Naive thymus-derived CD4-positive, alpha-beta T cell (primary cell): ENCODE measurements at regions of chr4 and their contacts with region 1.

Region 1: DNA sequence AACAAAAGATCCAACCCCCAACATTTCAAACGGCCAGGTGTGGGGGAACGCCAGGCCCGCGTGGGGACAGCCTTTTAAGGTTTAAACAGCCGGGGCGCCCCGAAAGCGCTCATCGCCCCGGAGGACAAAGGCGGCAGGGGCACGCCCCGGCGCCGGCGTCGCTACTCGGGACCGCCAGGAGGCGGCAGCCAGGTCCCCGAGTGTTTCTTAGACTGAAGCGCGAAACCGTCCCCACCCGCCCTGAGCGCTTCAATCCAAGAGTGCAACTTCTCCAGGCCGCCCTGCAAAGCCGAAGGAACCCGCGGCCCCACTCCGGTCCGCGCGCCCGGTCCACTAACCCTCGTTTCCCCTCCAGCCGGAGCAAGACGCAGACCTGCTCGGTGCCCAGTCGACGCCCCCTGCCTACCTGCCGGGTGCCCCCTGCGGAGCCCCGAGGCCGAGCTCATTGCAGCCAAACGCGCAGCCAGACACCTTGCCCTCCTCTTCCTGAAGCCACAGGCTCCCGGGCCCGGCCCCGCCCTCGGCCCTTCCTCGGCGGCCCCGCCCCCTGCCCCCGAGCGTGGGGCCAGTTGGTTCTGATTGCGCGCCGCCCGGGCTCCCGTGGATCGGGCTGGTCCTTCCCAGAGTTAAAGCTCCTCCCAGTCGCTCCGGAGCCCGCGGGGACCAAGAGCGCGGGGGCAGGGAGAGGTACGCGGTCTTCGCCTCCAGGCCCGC is at the start of gene CASP6:
- DNase-seq: peak; percentile 64 to 78 (median 75)
- ATAC-seq: peak; percentile 92
- H3K4me3 ChIP-seq: peak within 1 kb of the TSS; percentile 78
- H3K4me3 Mint-ChIP-seq: peak within 1 kb of the TSS; percentile 86 to 96 (median 94)
- H3K27ac ChIP-seq: peak within 1 kb of the TSS; percentile 83
- H3K27ac Mint-ChIP-seq: peak within 1 kb of the TSS; percentile 85 to 95 (median 94)
- H3K4me1 ChIP-seq: peaks cover 8 to 16% of the 10 kb centered on the region in 2 donors
- H3K4me1 Mint-ChIP-seq: peaks cover 20 to 50% (median 48%) of the 10 kb centered on the region in 7 donors
- H3K27me3 ChIP-seq: no peaks in the 10 kb centered on the region
- H3K27me3 Mint-ChIP-seq: no peaks in the 10 kb centered on the region
- total RNA-seq, gene CASP6: 9.3 to 29.9 (median 23.6) TPM

Region 2: DNA sequence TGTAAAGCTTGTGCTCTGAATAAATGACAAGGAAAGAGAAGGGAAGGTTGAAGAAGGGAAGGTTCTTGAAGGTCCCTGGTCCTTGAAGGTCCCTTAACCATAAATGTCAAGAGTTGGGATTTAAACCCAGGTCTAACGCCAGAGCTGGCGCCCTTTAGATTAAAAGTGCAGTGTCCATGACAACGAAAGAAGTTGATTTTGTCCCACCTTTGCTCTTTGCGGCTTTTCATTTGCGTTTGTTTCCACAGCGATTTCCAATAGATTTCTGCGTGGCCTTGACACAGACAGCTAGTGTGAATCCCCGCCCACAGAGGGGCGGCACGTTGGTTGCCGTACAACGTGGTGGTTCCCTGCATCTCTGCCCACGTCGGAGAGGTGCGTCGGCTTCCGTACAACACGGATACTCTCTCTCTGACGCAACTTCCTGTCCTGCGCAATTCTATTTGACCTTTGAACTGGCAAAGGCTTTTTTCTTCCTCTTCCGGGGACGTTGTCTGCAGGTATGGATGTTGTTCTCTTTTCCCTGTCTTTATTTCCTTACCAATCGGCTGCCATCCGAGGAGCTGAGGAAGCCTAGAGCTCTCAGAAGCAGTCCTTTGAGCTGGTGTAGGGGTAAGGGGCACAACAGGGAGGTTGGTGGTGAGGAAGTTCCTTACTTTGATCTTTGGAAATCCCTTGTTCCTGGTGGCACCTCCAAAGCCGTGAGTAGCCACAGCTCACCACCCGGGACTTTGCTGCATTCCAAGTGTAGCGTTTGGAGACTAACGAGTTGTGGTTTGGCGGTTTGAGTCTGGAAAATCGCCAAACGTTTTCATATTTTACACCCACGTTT is 1082.8 kb before region 1 on chr4 and contains the start of gene RPL34:
- CTCF ChIA-PET with region 1: no interaction called
- POLR2A ChIA-PET with region 1: no interaction called
- intact Hi-C with region 1: loop called in 1 of 2 experiments (anchors 5 kb)
- DNase-seq: peak; percentile 85 to 99 (median 96)
- ATAC-seq: peak; percentile 100
- H3K4me3 ChIP-seq: peak within 1 kb of the TSS; percentile 98
- H3K4me3 Mint-ChIP-seq: peak within 1 kb of the TSS; percentile 87 to 99 (median 96)
- H3K27ac ChIP-seq: peak within 1 kb of the TSS; percentile 90
- H3K27ac Mint-ChIP-seq: peak within 1 kb of the TSS; percentile 95 to 99 (median 97)
- H3K4me1 ChIP-seq: peaks cover 29 to 30% of the 10 kb centered on the region in 2 donors
- H3K4me1 Mint-ChIP-seq: peaks cover 33 to 81% (median 66%) of the 10 kb centered on the region in 7 donors
- H3K27me3 ChIP-seq: no peaks in the 10 kb centered on the region
- H3K27me3 Mint-ChIP-seq: peaks cover 0 to 3% (median 0%) of the 10 kb centered on the region in 5 donors
- total RNA-seq, gene RPL34: 1,411 to 3,442 (median 3,215) TPM

Region 3: GRCh38 chr4:109433205-109434006 is 269.7 kb before region 1 on chr4 and contains the start of gene SEC24B:
- CTCF ChIA-PET with region 1: interaction called, 6 read pairs
- POLR2A ChIA-PET with region 1: interaction called, 6 read pairs
- intact Hi-C with region 1: loop called (anchors 1 kb)
- DNase-seq: peak; percentile 84 to 91 (median 90)
- ATAC-seq: peak; percentile 95
- H3K4me3 ChIP-seq: peak within 1 kb of the TSS; percentile 74
- H3K4me3 Mint-ChIP-seq: peak within 1 kb of the TSS; percentile 83 to 94 (median 88)
- H3K27ac ChIP-seq: peak within 1 kb of the TSS; percentile 93
- H3K27ac Mint-ChIP-seq: peak within 1 kb of the TSS; percentile 75 to 95 (median 93)
- H3K4me1 ChIP-seq: peaks cover 11 to 19% of the 10 kb centered on the region in 2 donors
- H3K4me1 Mint-ChIP-seq: peaks cover 29 to 61% (median 54%) of the 10 kb centered on the region in 7 donors
- H3K27me3 ChIP-seq: no peaks in the 10 kb centered on the region
- H3K27me3 Mint-ChIP-seq: no peaks in the 10 kb centered on the region
- total RNA-seq, gene SEC24B: 29.2 to 41.8 (median 35.2) TPM

Region 4: GRCh38 chr4:109648266-109648996 is 54.7 kb before region 1 on chr4:
- CTCF ChIA-PET with region 1: interaction called, 6 read pairs
- POLR2A ChIA-PET with region 1: interaction called, 11 read pairs
- intact Hi-C with region 1: loop called (anchors 1 kb)
- DNase-seq: peak in 7 of 9 donors; percentile 69 to 91 (median 84)
- ATAC-seq: peak; percentile 96
- H3K4me3 ChIP-seq: peak overlapping the region; percentile 41
- H3K4me3 Mint-ChIP-seq: peak overlapping the region in 8 of 10 donors; percentile 59 to 88 (median 82)
- H3K27ac ChIP-seq: peak overlapping the region; percentile 81
- H3K27ac Mint-ChIP-seq: peak overlapping the region in 5 of 9 donors; percentile 92 to 100 (median 97)
- H3K4me1 ChIP-seq: peaks cover 68 to 70% of the 10 kb centered on the region in 2 donors
- H3K4me1 Mint-ChIP-seq: peaks cover 21 to 43% (median 34%) of the 10 kb centered on the region in 7 donors
- H3K27me3 ChIP-seq: no peaks in the 10 kb centered on the region
- H3K27me3 Mint-ChIP-seq: no peaks in the 10 kb centered on the region

Region 5: DNA sequence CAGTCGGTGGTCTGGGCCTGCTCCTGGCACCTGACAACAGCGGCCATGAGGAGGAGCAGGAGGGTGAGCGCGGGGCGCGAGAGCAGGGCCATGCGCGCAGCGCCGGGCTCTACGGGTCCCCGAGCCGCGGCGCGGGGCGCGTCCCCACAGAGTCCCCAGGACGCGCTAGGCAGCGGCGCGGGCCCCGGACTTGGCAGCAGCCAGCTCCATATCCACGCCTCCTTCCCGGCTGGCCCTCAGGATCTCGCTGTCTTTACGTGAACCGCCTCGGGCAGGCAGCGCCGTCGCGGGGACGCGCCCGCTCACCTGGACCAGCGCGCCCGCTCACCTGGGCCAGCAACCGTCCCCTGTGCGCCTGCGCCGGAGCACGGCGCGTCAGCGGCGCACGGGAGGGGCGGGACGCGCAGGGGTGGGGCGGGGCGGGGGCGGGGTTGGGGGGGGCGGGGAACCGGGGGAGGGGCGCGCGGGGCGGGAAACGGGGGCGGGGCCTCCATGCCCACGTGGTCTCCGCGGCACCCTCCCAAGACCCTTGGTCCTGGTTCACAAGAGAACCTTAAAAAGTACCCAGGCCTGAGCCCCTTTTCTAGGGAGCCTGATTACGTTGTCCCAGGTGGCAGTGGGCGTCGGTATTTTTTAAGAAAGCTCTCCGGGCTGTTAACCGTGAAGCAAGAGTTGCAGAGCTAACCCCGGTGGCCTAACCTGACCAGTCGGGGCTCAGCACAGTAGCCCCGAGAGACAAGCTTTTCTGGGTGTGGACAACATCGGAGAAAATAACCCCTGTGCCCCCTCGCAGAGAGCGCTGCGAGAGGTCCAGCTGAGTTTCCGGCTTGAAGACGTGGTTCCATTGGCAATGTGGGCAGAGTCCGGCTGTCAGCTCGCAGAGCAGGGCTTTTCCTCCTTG is 26.9 kb after region 1 on chr4 and contains the start of gene PLA2G12A:
- CTCF ChIA-PET with region 1: interaction called, 3 read pairs
- POLR2A ChIA-PET with region 1: interaction called, 4 read pairs
- intact Hi-C with region 1: loop called (anchors 1 kb)
- DNase-seq: peak; percentile 75 to 91 (median 86)
- ATAC-seq: peak; percentile 96
- H3K4me3 ChIP-seq: peak within 1 kb of the TSS; percentile 96
- H3K4me3 Mint-ChIP-seq: peak within 1 kb of the TSS; percentile 88 to 96 (median 92)
- H3K27ac ChIP-seq: peak within 1 kb of the TSS; percentile 78
- H3K27ac Mint-ChIP-seq: peak within 1 kb of the TSS; percentile 64 to 95 (median 90)
- H3K4me1 ChIP-seq: peaks cover 10 to 14% of the 10 kb centered on the region in 2 donors
- H3K4me1 Mint-ChIP-seq: peaks cover 12 to 39% (median 30%) of the 10 kb centered on the region in 7 donors
- H3K27me3 ChIP-seq: no peaks in the 10 kb centered on the region
- H3K27me3 Mint-ChIP-seq: peaks cover 0 to 4% (median 0%) of the 10 kb centered on the region in 5 donors
- total RNA-seq, gene PLA2G12A: 11.5 to 15.4 (median 14.5) TPM

Region 6: GRCh38 chr4:109977854-109978501 is 274.9 kb after region 1 on chr4:
- CTCF ChIA-PET with region 1: no interaction called
- POLR2A ChIA-PET with region 1: no interaction called
- intact Hi-C with region 1: loop called (anchors 2 to 5 kb)
- DNase-seq: peak in 5 of 9 donors; percentile 5 to 34 (median 10)
- ATAC-seq: peak; percentile 45
- H3K4me3 ChIP-seq: no peak overlapping the region
- H3K4me3 Mint-ChIP-seq: no peak overlapping the region
- H3K27ac ChIP-seq: no peak overlapping the region
- H3K27ac Mint-ChIP-seq: no peak overlapping the region
- H3K4me1 ChIP-seq: no peaks in the 10 kb centered on the region
- H3K4me1 Mint-ChIP-seq: peaks cover 0 to 5% (median 0%) of the 10 kb centered on the region in 7 donors
- H3K27me3 ChIP-seq: no peaks in the 10 kb centered on the region
- H3K27me3 Mint-ChIP-seq: peaks cover 9 to 57% (median 28%) of the 10 kb centered on the region in 5 donors